Common myeloid progenitor, CD34-positive (primary cell): ENCODE measurements at regions of chr17 and their contacts with region 1.

Region 1: DNA sequence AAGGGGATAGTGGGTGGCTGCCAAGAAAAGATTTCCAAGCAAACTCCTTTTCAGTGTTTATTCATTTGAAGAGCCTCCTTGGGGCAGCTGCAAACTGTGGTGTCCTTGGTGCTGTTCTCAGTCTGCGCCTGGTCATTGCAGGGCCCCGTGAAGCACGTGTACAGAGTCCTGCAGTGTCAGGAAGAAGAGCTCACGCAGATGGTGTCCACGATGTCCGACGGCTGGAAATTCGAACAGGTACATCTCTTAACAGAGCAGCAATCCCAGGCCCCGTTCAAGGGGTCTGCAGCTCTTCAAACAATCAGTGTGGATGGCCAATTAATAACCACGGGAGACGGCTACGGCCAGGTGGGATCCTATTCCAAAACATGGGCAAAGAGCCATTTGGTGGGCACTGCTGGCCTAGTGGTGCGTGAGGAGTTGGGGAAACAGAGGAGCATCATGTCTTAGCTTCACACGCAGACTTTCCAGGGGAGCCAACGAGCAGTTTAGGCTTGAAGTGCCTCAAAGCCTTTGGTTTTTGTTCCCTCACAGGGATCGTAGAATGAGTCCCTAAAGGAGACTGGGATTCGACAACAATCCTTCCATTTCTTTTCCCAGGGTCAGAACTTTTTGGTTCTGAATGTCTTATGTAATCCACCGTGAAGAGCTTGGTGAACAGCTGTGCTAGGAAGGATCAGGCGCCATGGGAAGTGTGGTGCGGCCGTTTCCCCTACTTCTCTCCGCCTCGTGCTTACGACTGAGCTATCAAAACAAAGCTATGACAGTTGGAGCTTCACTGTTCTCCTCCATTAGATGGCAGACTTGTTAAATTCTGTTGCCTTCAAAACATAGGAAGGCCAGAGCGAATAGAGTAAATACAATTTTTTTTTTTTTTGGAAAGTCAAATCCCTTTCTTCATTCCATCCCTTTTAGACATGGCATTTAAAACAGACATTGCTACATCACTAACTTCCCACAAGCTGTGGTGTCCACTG is 12.6 kb downstream of the KCTD2 start:
- DNase-seq: peak; percentile 69 to 79 (median 78)
- H3K4me3 ChIP-seq: no peak overlapping the region
- H3K27ac ChIP-seq: peak overlapping the region; percentile 46 to 68
- H3K4me1 ChIP-seq: peaks cover 1 to 10% (median 5%) of the 10 kb centered on the region in 4 experiments
- H3K27me3 ChIP-seq: no peaks in the 10 kb centered on the region

Region 2: GRCh38 chr17:75046582-75047289 is 12.9 kb before region 1 on chr17 and contains the starts of genes ATP5PD and KCTD2:
- CTCF ChIA-PET with region 1: interaction called, 18 read pairs
- POLR2A ChIA-PET with region 1: interaction called, 3 read pairs
- DNase-seq: peak; percentile 97 to 98 (median 98)
- H3K4me3 ChIP-seq: peak within 1 kb of the TSS; percentile 60 to 98 (median 94)
- H3K27ac ChIP-seq: peak within 1 kb of the TSS; percentile 79 to 90
- H3K4me1 ChIP-seq: peaks cover 9 to 23% (median 18%) of the 10 kb centered on the region in 4 experiments
- H3K27me3 ChIP-seq: no peaks in the 10 kb centered on the region

Region 3: GRCh38 chr17:75077496-75078283 is 18.0 kb after region 1 on chr17:
- CTCF ChIA-PET with region 1: interaction called, 107 read pairs
- POLR2A ChIA-PET with region 1: no interaction called
- DNase-seq: peak; percentile 47 to 82 (median 72)
- H3K4me3 ChIP-seq: peak overlapping the region in 6 of 7 experiments; percentile 19 to 75 (median 59)
- H3K27ac ChIP-seq: no peak overlapping the region
- H3K4me1 ChIP-seq: peaks cover 0 to 20% (median 9%) of the 10 kb centered on the region in 4 experiments
- H3K27me3 ChIP-seq: no peaks in the 10 kb centered on the region

Region 4: DNA sequence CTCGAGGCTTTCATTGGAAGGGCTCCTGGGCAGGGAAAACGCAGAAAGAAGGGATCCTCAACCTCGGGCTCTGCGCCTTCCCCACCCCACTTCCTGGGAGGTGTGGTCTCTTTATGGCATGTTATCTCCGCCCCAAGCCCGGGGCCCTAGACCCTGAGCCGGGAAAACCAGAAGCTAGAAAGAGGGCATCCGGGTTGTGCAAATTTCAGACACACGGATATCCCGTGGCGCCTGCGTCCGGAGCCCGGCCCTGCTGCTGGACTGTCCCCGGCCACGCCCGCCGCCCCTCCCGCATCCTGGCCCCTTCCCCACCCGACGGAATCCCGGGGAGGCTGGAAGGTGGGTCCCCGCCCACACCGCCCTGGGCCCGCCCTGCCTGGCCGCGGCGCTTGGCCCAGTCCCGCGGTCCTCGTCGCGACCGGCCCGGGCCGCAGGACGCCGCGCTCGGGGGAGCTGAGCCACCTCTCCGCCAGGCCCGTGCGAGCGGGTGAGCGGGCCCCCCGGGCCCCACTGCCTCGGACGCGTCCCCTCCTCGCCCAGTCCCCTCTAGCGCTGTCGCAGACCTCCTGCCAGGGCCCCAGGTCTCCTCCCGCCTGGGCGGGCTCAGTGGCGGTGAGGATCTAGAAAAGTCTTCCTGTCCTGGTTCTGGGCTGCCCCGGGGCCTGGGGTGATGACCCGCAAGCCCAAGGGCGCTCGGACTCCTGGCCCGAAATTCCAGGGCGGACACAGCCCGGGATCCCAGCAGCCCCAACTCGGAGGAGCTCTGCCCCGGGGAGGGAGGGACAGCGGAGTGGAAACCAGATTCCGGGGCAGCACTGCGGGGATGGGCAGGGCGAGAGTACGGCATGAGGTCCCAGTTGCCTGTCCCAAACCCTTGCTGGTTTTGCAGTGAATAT is 28.1 kb after region 1 on chr17 and contains the start of gene SLC16A5:
- CTCF ChIA-PET with region 1: interaction called, 13 read pairs
- POLR2A ChIA-PET with region 1: interaction called, 3 read pairs
- DNase-seq: peak in 2 of 3 donors; percentile 42 to 52
- H3K4me3 ChIP-seq: peak within 1 kb of the TSS; percentile 7 to 87 (median 75)
- H3K27ac ChIP-seq: peak within 1 kb of the TSS in 1 of 2 experiments; percentile 67
- H3K4me1 ChIP-seq: peaks cover 0 to 54% (median 29%) of the 10 kb centered on the region in 4 experiments
- H3K27me3 ChIP-seq: no peaks in the 10 kb centered on the region

Region 5: DNA sequence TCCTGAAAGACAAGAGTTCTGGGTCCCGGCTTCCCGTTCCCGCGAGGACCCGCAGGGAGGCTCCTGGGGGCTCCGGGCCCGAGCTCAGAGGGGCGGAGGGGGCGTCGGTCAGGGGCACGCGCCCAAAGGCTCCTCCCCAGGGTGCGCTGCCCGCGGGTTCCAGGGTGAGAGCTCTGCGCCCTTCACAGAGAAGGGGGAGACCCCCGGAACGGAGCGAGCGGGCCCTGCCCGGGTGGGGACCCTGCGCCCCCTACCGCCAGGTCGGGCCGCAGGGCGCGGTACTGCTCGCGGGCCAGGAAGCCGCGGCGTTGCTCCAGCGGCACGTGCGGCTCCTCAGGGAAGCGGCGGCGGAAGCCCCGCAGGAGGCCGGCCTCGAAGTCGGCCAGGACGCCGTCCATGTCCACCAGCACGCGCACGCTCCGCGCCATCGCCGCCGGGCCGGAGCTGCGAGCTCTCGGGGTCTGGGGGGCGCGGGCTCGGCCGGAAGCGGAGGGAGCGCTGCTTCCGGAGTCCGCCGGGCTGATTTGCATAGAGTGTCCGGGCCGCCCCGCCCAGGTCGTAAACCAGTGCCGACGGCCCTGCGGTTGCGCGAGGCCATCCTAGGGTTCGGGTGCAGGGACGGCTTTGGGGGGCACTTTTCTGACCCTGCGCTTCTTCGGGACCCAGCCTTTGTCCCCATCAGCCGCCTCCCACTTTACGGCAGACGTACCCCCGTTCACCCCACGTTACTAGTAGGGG is 71.8 kb after region 1 on chr17 and contains the start of gene NT5C:
- CTCF ChIA-PET with region 1: interaction called, 33 read pairs
- POLR2A ChIA-PET with region 1: no interaction called
- DNase-seq: peak; percentile 66 to 83 (median 71)
- H3K4me3 ChIP-seq: peak within 1 kb of the TSS; percentile 64 to 88 (median 83)
- H3K27ac ChIP-seq: peak within 1 kb of the TSS; percentile 50 to 86
- H3K4me1 ChIP-seq: peaks cover 0 to 23% (median 17%) of the 10 kb centered on the region in 4 experiments
- H3K27me3 ChIP-seq: no peaks in the 10 kb centered on the region